ENCODE measurements at regions of chr1 and their contacts with region 1.

Region 1: DNA sequence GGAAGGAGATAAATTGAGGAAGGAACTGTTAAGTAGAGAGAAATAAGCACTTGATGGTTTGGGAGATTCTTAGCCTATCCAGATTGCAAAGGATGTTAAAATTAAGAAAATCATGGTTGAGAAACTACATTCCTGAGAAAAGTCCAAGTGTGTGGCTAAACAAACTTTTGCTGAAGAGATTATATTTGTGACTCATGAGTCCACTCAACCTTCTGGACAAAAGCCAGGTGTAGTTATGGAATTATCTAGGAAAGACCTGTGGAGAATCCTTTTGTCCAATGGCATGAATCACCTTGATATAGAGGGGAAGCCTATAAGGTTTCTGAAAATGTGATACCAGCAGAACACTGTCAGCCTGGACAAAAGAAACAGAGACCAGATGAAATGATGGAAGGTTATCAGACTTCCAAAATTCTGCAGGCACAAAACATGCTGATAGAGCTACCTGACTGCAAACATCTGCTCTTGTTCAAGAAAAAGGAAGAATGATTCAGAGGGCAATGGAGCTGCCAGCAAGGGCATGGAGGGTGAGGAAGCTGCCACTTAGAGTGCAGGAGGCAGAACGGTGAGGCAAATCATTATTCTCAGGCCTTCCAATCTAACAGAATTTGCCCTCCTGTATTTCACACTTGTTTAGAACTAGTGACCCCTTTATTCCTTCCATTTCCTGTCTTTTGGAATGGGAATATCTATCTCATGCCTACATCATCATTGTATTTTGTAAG is 300.6 kb upstream of the PRMT6 start:
- DNase-seq: peak; percentile 93
- H3K4me3 Mint-ChIP-seq: no peak overlapping the region
- H3K27ac Mint-ChIP-seq: peak overlapping the region; percentile 6
- H3K4me1 Mint-ChIP-seq: peaks cover 17% of the 10 kb centered on the region
- H3K27me3 Mint-ChIP-seq: no peaks in the 10 kb centered on the region
- CTCF ChIP-seq: no peak

Region 2: DNA sequence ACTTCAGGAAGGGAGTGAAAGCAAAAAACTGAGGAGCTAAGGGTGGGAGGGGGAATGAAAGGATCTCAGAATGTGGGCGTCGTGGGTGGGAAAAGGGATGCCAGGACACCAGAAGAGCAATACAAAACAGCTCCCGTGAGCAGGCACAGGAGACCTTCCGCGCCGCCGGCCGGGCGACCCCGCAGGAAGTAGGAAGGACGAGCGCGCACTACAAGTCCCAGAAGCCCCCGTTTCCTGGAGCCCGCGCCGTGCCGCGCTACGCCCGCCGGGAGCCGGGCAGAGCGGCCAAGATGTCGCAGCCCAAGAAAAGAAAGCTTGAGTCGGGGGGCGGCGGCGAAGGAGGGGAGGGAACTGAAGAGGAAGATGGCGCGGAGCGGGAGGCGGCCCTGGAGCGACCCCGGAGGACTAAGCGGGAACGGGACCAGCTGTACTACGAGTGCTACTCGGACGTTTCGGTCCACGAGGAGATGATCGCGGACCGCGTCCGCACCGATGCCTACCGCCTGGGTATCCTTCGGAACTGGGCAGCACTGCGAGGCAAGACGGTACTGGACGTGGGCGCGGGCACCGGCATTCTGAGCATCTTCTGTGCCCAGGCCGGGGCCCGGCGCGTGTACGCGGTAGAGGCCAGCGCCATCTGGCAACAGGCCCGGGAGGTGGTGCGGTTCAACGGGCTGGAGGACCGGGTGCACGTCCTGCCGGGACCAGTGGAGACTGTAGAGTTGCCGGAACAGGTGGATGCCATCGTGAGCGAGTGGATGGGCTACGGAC is 300.8 kb after region 1 on chr1 and contains the start of gene PRMT6:
- CTCF ChIA-PET with region 1: no interaction called
- POLR2A ChIA-PET with region 1: no interaction called
- intact Hi-C with region 1: loop called (anchors 5 kb)
- DNase-seq: peak; percentile 75
- H3K4me3 Mint-ChIP-seq: peak within 1 kb of the TSS; percentile 95
- H3K27ac Mint-ChIP-seq: peak within 1 kb of the TSS; percentile 86
- H3K4me1 Mint-ChIP-seq: peaks cover 12% of the 10 kb centered on the region
- H3K27me3 Mint-ChIP-seq: no peaks in the 10 kb centered on the region
- CTCF ChIP-seq: peak; percentile 8
- total RNA-seq, gene PRMT6: 11.7 and 14.0 TPM in 2 replicates